Calu3 (cell line): ENCODE measurements at regions of chr6 and their contacts with region 1.

Region 1: GRCh38 chr6:55276745-55277530 is 50.3 kb upstream of the GFRAL start:
- DNase-seq: peak; percentile 43
- H3K4me3 Mint-ChIP-seq: no peak overlapping the region
- H3K27ac Mint-ChIP-seq: no peak overlapping the region
- H3K4me1 Mint-ChIP-seq: no peaks in the 10 kb centered on the region
- H3K27me3 Mint-ChIP-seq: no peaks in the 10 kb centered on the region
- CTCF ChIP-seq: peak; percentile 56

Region 2: DNA sequence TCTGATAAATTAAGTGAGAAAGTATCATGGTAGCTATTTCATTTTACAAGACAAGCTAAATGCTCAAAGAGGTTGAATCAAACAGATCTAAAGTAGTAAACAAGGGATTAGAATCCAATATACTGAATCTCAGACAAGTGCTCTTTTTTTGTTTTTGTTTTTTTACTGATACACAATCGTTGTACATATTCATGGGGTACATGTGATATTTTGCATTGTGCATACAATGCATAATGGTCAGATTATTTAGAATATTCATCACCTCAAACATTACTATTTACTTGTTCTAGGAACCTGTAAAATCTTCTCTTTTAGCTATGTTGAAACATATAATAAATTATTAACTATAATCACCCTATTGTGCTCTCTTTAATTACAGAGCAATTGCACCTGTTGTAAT is 159.7 kb before region 1 on chr6:
- CTCF ChIA-PET with region 1: no interaction called
- intact Hi-C with region 1: no loop called
- DNase-seq: no peak
- H3K4me3 Mint-ChIP-seq: no peak overlapping the region
- H3K27ac Mint-ChIP-seq: no peak overlapping the region
- H3K4me1 Mint-ChIP-seq: no peaks in the 10 kb centered on the region
- H3K27me3 Mint-ChIP-seq: no peaks in the 10 kb centered on the region
- CTCF ChIP-seq: no peak

Region 3: GRCh38 chr6:55818482-55818881 is 541.5 kb after region 1 on chr6:
- CTCF ChIA-PET with region 1: no interaction called
- intact Hi-C with region 1: no loop called
- DNase-seq: no peak
- H3K4me3 Mint-ChIP-seq: no peak overlapping the region
- H3K27ac Mint-ChIP-seq: no peak overlapping the region
- H3K4me1 Mint-ChIP-seq: no peaks in the 10 kb centered on the region
- H3K27me3 Mint-ChIP-seq: no peaks in the 10 kb centered on the region
- CTCF ChIP-seq: no peak

Region 4: GRCh38 chr6:55953335-55953734 is 676.4 kb after region 1 on chr6:
- CTCF ChIA-PET with region 1: interaction called, 6 read pairs
- intact Hi-C with region 1: loop called (anchors 2 kb)
- DNase-seq: no peak
- H3K4me3 Mint-ChIP-seq: no peak overlapping the region
- H3K27ac Mint-ChIP-seq: no peak overlapping the region
- H3K4me1 Mint-ChIP-seq: peaks cover 14% of the 10 kb centered on the region
- H3K27me3 Mint-ChIP-seq: no peaks in the 10 kb centered on the region
- CTCF ChIP-seq: no peak